Transverse colon (tissue), 4 donors: ENCODE measurements at regions of chrX and their contacts with region 1.

Region 1: GRCh38 chrX:153763989-153764755 is at the start of gene PLXNB3:
- DNase-seq: peak; percentile 84
- H3K4me3 ChIP-seq: peak within 1 kb of the TSS in 3 of 4 donors; percentile 2 to 13 (median 12)
- H3K27ac ChIP-seq: peak within 1 kb of the TSS; percentile 47 to 81 (median 65)
- H3K4me1 ChIP-seq: no peaks in the 10 kb centered on the region
- H3K27me3 ChIP-seq: no peaks in the 10 kb centered on the region
- CTCF ChIP-seq: peak; percentile 67 to 86 (median 76)
- EP300 ChIP-seq: no peak
- POLR2A ChIP-seq: no peak
- total RNA-seq, gene PLXNB3: 3.1 to 46.2 (median 24.7) TPM

Region 2: GRCh38 chrX:153778684-153779101 is 14.5 kb after region 1 on chrX:
- in situ Hi-C with region 1: no loop called
- intact Hi-C with region 1: no loop called
- DNase-seq: no peak
- H3K4me3 ChIP-seq: no peak overlapping the region
- H3K27ac ChIP-seq: no peak overlapping the region
- H3K4me1 ChIP-seq: peaks cover 4 to 21% (median 11%) of the 10 kb centered on the region in 4 donors
- H3K27me3 ChIP-seq: peaks cover 3% of the 10 kb centered on the region
- CTCF ChIP-seq: no peak
- EP300 ChIP-seq: no peak
- POLR2A ChIP-seq: no peak

Region 3: DNA sequence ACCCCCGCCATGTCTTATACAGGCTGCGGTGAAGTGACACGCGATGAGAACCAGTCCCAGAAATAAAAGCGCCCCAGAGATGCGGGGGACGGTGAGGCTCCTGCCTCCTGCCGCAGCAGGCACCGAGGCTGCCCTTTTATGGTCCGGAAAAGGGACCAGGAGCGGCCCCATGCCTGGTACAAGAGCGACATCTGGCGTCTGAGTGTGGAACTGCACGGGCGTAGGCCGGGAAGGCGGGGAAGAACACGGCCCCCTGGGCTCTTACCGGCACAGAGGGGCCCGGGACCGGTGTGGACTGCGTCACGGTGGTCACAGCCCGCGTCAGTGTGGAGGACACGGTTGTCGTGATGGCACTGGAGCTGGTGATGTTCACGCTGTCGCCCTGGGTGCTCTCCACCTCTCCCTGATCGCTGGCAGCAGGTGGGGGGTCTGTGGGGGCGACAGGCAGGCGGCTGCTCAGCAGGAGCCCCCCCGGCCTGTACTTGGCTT is 189.2 kb after region 1 on chrX:
- in situ Hi-C with region 1: loop called in 1 of 4 experiments (anchors 25 kb)
- intact Hi-C with region 1: loop called (anchors 5 kb)
- DNase-seq: peak; percentile 81
- H3K4me3 ChIP-seq: peak overlapping the region in 1 of 4 donors; percentile 10
- H3K27ac ChIP-seq: peak overlapping the region; percentile 67 to 72 (median 70)
- H3K4me1 ChIP-seq: peaks cover 0 to 12% (median 0%) of the 10 kb centered on the region in 4 donors
- H3K27me3 ChIP-seq: no peaks in the 10 kb centered on the region
- CTCF ChIP-seq: peak; percentile 89 to 100 (median 94)
- EP300 ChIP-seq: no peak
- POLR2A ChIP-seq: no peak

Region 4: GRCh38 chrX:153971450-153972367 is 207.5 kb after region 1 on chrX and contains the start of gene HCFC1:
- in situ Hi-C with region 1: loop called in 1 of 4 experiments (anchors 25 kb)
- intact Hi-C with region 1: no loop called
- DNase-seq: peak; percentile 95
- H3K4me3 ChIP-seq: peak within 1 kb of the TSS; percentile 63 to 91 (median 86)
- H3K27ac ChIP-seq: peak within 1 kb of the TSS; percentile 94 to 100 (median 98)
- H3K4me1 ChIP-seq: peaks cover 0 to 48% (median 46%) of the 10 kb centered on the region in 4 donors
- H3K27me3 ChIP-seq: no peaks in the 10 kb centered on the region
- CTCF ChIP-seq: no peak
- EP300 ChIP-seq: no peak
- POLR2A ChIP-seq: no peak
- total RNA-seq, gene HCFC1: 34.0 to 68.5 (median 49.8) TPM